ENCODE measurements at regions of chr11 and their contacts with region 1.

Region 1: DNA sequence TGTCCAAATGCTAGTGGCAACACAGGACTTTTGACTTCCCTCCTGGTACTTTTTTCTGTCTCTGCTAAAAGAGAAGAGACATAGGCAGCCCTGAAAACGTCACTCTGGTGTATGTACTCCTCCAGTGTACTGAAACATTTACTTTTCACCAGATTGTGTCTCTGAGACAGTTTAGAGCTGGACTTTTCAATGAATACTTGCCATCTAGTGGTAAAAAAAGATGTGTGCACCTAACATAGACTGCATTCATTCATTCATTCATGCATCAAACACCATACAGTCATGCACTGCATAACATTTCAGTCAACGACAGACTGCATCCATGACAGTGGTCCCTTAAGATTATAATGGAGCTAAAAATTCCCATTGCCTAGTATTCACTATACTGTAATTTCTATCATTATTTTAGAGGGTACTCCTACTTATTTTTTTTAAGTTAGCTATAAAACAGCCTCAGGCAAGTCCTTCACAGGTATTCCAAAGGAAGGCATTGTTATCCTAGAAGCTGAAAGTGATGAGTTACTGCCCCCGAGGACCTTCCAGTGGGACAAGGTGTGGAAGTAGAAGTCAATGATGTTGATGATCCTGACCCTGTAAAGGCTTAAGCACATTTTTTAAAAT is 186.2 kb downstream of the SPON1 start:
- DNase-seq: peak; percentile 52
- H3K4me3 Mint-ChIP-seq: no peak overlapping the region
- H3K27ac Mint-ChIP-seq: no peak overlapping the region
- H3K4me1 Mint-ChIP-seq: no peaks in the 10 kb centered on the region
- H3K27me3 Mint-ChIP-seq: peaks cover 21% of the 10 kb centered on the region
- CTCF ChIP-seq: peak; percentile 58

Region 2: GRCh38 chr11:13772223-13773046 is 376.3 kb before region 1 on chr11:
- CTCF ChIA-PET with region 1: interaction called, 46 read pairs
- POLR2A ChIA-PET with region 1: interaction called, 3 read pairs
- intact Hi-C with region 1: loop called (anchors 1 kb)
- DNase-seq: peak; percentile 76
- H3K4me3 Mint-ChIP-seq: no peak overlapping the region
- H3K27ac Mint-ChIP-seq: no peak overlapping the region
- H3K4me1 Mint-ChIP-seq: no peaks in the 10 kb centered on the region
- H3K27me3 Mint-ChIP-seq: peaks cover 54% of the 10 kb centered on the region
- CTCF ChIP-seq: peak; percentile 74

Region 3: GRCh38 chr11:13942983-13943382 is 205.8 kb before region 1 on chr11:
- CTCF ChIA-PET with region 1: interaction called, 12 read pairs
- POLR2A ChIA-PET with region 1: no interaction called
- intact Hi-C with region 1: no loop called
- DNase-seq: peak; percentile 83
- H3K4me3 Mint-ChIP-seq: no peak overlapping the region
- H3K27ac Mint-ChIP-seq: no peak overlapping the region
- H3K4me1 Mint-ChIP-seq: peaks cover 22% of the 10 kb centered on the region
- H3K27me3 Mint-ChIP-seq: no peaks in the 10 kb centered on the region
- CTCF ChIP-seq: no peak

Region 4: GRCh38 chr11:13962562-13963168 is 186.1 kb before region 1 on chr11 and contains the start of gene SPON1:
- CTCF ChIA-PET with region 1: interaction called, 169 read pairs
- POLR2A ChIA-PET with region 1: no interaction called
- intact Hi-C with region 1: no loop called
- DNase-seq: no peak
- H3K4me3 Mint-ChIP-seq: no peak within 1 kb of the TSS
- H3K27ac Mint-ChIP-seq: no peak within 1 kb of the TSS
- H3K4me1 Mint-ChIP-seq: no peaks in the 10 kb centered on the region
- H3K27me3 Mint-ChIP-seq: peaks cover 87% of the 10 kb centered on the region
- CTCF ChIP-seq: no peak
- total RNA-seq, gene SPON1: not detected in 2 replicates

Region 5: DNA sequence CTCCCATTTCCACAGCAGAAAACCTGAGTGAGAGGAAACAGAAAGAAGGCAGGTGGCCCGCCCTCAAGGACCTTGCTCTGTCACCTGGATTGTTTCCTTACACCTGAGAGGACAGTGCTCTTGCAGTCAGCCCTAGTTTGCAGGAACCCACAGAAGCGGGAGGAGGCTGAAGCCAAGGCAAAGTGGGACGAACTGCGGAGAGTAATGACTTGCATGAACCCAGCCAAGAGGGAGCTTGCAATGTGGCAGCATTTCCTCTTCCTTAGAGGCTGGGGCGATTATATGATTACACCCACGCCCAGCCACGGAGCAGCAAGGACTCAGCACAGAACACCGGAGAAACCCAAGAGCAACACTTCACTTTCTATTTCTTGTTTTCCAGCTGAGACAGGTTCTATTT is 83.6 kb before region 1 on chr11:
- CTCF ChIA-PET with region 1: no interaction called
- POLR2A ChIA-PET with region 1: no interaction called
- intact Hi-C with region 1: no loop called
- DNase-seq: no peak
- H3K4me3 Mint-ChIP-seq: no peak overlapping the region
- H3K27ac Mint-ChIP-seq: no peak overlapping the region
- H3K4me1 Mint-ChIP-seq: no peaks in the 10 kb centered on the region
- H3K27me3 Mint-ChIP-seq: peaks cover 26% of the 10 kb centered on the region
- CTCF ChIP-seq: no peak

Region 6: GRCh38 chr11:14107050-14107430 is 41.7 kb before region 1 on chr11:
- CTCF ChIA-PET with region 1: interaction called, 10 read pairs
- POLR2A ChIA-PET with region 1: no interaction called
- intact Hi-C with region 1: no loop called
- DNase-seq: no peak
- H3K4me3 Mint-ChIP-seq: no peak overlapping the region
- H3K27ac Mint-ChIP-seq: no peak overlapping the region
- H3K4me1 Mint-ChIP-seq: no peaks in the 10 kb centered on the region
- H3K27me3 Mint-ChIP-seq: peaks cover 14% of the 10 kb centered on the region
- CTCF ChIP-seq: no peak

Region 7: GRCh38 chr11:14124886-14125285 is 23.9 kb before region 1 on chr11:
- CTCF ChIA-PET with region 1: interaction called, 17 read pairs
- POLR2A ChIA-PET with region 1: no interaction called
- intact Hi-C with region 1: no loop called
- DNase-seq: no peak
- H3K4me3 Mint-ChIP-seq: no peak overlapping the region
- H3K27ac Mint-ChIP-seq: no peak overlapping the region
- H3K4me1 Mint-ChIP-seq: peaks cover 24% of the 10 kb centered on the region
- H3K27me3 Mint-ChIP-seq: no peaks in the 10 kb centered on the region
- CTCF ChIP-seq: no peak

Region 8: DNA sequence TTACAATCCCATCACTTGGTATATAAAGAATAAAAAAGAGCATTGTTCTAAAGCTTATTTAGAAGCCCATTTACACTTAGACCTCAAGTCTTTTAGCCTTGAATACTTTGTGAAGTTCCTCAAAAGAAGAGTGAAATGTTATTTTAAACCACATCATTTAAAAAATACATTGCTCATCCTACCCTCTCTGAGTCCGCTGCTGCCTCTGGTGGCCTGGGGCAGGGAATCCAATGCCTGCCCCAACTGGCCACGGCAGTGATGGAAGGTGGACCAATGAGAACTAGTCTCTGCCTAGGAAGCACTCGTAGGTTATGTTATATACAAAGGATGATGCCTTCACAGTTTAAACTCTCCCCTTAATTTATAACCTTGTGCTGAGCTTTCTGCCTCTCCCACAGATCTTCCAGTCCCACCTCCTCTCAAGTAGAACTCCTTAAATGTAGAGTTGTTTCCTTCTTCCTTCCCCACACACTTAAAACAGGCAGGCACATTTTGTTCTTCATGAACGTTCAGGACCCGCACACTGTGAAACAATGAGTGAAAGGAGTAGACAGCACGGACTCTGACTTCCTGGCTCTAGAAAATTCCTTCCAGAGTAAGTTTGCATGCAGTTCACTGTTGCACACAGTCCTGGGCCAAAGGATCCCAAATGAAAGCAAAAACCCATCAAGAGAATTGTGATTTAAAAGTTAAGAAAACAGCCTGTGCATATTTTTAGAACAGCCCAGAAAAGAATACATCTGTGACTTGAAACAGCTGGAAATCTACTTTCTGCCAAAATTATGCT is 42.4 kb after region 1 on chr11:
- CTCF ChIA-PET with region 1: interaction called, 11 read pairs
- POLR2A ChIA-PET with region 1: no interaction called
- intact Hi-C with region 1: no loop called
- DNase-seq: no peak
- H3K4me3 Mint-ChIP-seq: no peak overlapping the region
- H3K27ac Mint-ChIP-seq: no peak overlapping the region
- H3K4me1 Mint-ChIP-seq: no peaks in the 10 kb centered on the region
- H3K27me3 Mint-ChIP-seq: peaks cover 26% of the 10 kb centered on the region
- CTCF ChIP-seq: no peak

Measured in MCF 10A (cell line).